Heart left ventricle (tissue), 16 donors: ENCODE measurements at regions of chr4 and their contacts with region 1.

Region 1: GRCh38 chr4:38023347-38024205 is 63.4 kb downstream of the PTTG2 start:
- DNase-seq: no peak
- ATAC-seq: peak in 3 of 4 donors; percentile 22 to 53 (median 39)
- H3K4me3 ChIP-seq: peak overlapping the region in 1 of 12 donors; percentile 34
- H3K27ac ChIP-seq: peak overlapping the region in 2 of 12 donors; percentile 75 to 77
- H3K4me1 ChIP-seq: peaks cover 0 to 20% (median 7%) of the 10 kb centered on the region in 12 donors
- H3K27me3 ChIP-seq: no peaks in the 10 kb centered on the region
- CTCF ChIP-seq: no peak
- POLR2A ChIP-seq: no peak

Region 2: GRCh38 chr4:37989398-37990260 is 33.9 kb before region 1 on chr4:
- intact Hi-C with region 1: loop called in 3 of 10 experiments (anchors 5 kb)
- DNase-seq: no peak
- ATAC-seq: peak; percentile 8 to 83 (median 72)
- H3K4me3 ChIP-seq: no peak overlapping the region
- H3K27ac ChIP-seq: peak overlapping the region; percentile 18 to 84 (median 80)
- H3K4me1 ChIP-seq: peaks cover 3 to 80% (median 50%) of the 10 kb centered on the region in 12 donors
- H3K27me3 ChIP-seq: no peaks in the 10 kb centered on the region
- CTCF ChIP-seq: no peak
- POLR2A ChIP-seq: peak in 1 of 2 donors; percentile 22

Region 3: GRCh38 chr4:38132107-38132673 is 108.6 kb after region 1 on chr4:
- intact Hi-C with region 1: no loop called
- DNase-seq: peak in 4 of 5 donors; percentile 49 to 69 (median 53)
- ATAC-seq: peak; percentile 54 to 88 (median 82)
- H3K4me3 ChIP-seq: peak overlapping the region in 1 of 12 donors; percentile 8
- H3K27ac ChIP-seq: peak overlapping the region; percentile 18 to 79 (median 64)
- H3K4me1 ChIP-seq: peaks cover 0 to 51% (median 25%) of the 10 kb centered on the region in 12 donors
- H3K27me3 ChIP-seq: no peaks in the 10 kb centered on the region
- CTCF ChIP-seq: no peak
- POLR2A ChIP-seq: no peak